Activated CD8-positive, alpha-beta memory T cell treated with anti-CD3 and anti-CD28 coated beads, Interleukin-2, amount 10 ng/mL, durations not matched to agents 7 days and 5 days (primary cell): ENCODE measurements at regions of chr3 and their contacts with region 1.

Region 1: GRCh38 chr3:32467333-32468070 is 35.1 kb downstream of the CMTM6 start:
- DNase-seq: peak; percentile 78
- ATAC-seq: peak; percentile 94
- H3K4me3 Mint-ChIP-seq: peak overlapping the region; percentile 9
- H3K27ac Mint-ChIP-seq: no peak overlapping the region
- H3K4me1 Mint-ChIP-seq: peaks cover 38% of the 10 kb centered on the region
- H3K27me3 Mint-ChIP-seq: no peaks in the 10 kb centered on the region

Region 2: DNA sequence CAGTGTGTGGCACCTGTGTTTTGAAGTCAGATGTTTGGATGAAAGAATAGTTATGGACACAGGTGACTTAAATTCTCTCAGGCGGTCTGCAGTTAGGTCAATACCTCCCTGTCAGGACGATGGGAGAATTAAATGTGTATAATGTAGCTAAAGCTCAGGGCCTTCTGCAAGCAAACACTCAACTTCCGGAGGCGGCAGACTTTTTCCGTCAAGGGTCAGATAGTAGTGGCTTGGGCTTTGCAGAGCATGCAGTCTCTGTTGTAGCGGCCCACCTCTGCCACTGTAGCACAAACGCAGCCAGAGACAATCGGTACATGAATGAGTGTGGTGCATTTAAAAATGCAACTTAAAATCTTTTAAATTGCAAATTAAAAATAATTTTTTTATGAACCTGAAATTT is 181.6 kb before region 1 on chr3:
- CTCF ChIA-PET with region 1: interaction called, 11 read pairs
- DNase-seq: peak; percentile 65
- ATAC-seq: peak; percentile 62
- H3K4me3 Mint-ChIP-seq: peak overlapping the region; percentile 8
- H3K27ac Mint-ChIP-seq: peak overlapping the region; percentile 83
- H3K4me1 Mint-ChIP-seq: peaks cover 31% of the 10 kb centered on the region
- H3K27me3 Mint-ChIP-seq: peaks cover 3% of the 10 kb centered on the region

Region 3: DNA sequence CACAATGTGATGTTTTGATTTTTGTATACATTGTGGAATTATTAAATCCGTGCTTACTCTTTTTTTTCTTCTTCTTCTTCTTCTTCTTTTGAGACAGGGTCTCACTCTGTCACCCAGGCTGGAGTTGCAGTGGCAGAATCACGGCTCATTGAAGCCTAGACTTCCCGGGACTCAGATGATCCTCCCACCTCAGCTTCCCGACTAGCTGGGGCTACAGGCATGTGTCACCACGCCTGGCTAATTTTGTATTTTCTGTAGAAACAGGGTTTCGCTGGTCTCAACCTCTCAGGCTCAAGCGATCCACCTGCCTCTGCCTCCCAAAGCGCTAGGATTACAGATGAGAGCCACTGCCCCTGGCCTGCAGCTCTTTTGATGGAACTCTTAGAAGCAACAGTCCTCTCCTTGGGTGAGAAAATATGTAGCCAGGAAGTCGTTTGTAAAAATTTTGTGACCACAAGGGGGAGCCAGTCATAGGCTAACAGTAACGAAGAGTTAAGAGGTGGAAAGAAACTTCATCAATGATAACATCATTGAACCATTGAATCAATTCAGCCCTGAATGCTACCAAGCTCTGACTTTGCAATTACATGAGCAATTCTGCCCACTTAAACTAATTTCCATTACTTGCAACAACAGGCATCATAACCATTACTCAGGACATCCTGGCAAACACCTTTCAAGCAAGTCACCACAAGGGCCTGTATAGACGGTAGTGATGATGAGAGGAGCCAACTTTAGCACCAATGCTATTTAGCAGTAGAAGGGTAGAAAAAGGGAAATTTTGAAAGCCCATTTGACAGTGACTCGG is 92.5 kb before region 1 on chr3:
- CTCF ChIA-PET with region 1: interaction called, 114 read pairs
- DNase-seq: peak; percentile 80
- ATAC-seq: peak; percentile 85
- H3K4me3 Mint-ChIP-seq: no peak overlapping the region
- H3K27ac Mint-ChIP-seq: peak overlapping the region; percentile 22
- H3K4me1 Mint-ChIP-seq: peaks cover 23% of the 10 kb centered on the region
- H3K27me3 Mint-ChIP-seq: peaks cover 3% of the 10 kb centered on the region

Region 4: DNA sequence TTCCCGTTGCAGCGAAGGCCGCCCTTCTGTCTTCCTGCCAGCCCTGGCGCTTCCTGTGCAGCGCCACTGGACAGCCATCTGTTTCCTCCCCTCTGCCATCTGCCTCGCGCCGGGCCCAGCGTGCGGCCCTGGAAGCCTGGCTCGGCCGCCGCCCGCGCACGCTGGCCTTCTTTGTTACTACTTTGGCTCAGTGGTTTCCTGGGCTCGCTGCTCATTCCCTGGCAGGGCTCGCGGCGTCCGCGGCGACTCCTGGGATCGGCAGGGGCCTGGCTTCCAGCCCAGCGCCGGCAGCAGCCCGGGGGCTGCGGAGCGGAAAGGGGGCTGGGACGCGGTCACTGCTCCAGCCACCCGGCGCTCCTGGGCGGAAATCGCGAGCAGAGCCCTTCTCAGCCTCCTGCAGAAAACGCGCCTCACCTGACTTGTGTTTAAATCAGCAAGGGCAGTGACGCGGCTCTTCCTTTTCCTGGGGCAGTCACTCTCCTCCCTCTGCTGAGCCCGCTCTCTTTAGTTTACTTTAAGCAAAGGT is 65.9 kb before region 1 on chr3:
- CTCF ChIA-PET with region 1: interaction called, 42 read pairs
- DNase-seq: peak; percentile 81
- ATAC-seq: peak; percentile 87
- H3K4me3 Mint-ChIP-seq: peak overlapping the region; percentile 76
- H3K27ac Mint-ChIP-seq: peak overlapping the region; percentile 93
- H3K4me1 Mint-ChIP-seq: peaks cover 65% of the 10 kb centered on the region
- H3K27me3 Mint-ChIP-seq: no peaks in the 10 kb centered on the region

Region 5: GRCh38 chr3:32428092-32429068 is 39.1 kb before region 1 on chr3:
- CTCF ChIA-PET with region 1: interaction called, 40 read pairs
- DNase-seq: peak; percentile 75
- ATAC-seq: peak; percentile 50
- H3K4me3 Mint-ChIP-seq: peak overlapping the region; percentile 61
- H3K27ac Mint-ChIP-seq: peak overlapping the region; percentile 99
- H3K4me1 Mint-ChIP-seq: peaks cover 91% of the 10 kb centered on the region
- H3K27me3 Mint-ChIP-seq: no peaks in the 10 kb centered on the region

Region 6: GRCh38 chr3:32781210-32781968 is 313.9 kb after region 1 on chr3:
- CTCF ChIA-PET with region 1: no interaction called
- DNase-seq: peak; percentile 81
- ATAC-seq: peak; percentile 95
- H3K4me3 Mint-ChIP-seq: peak overlapping the region; percentile 81
- H3K27ac Mint-ChIP-seq: peak overlapping the region; percentile 50
- H3K4me1 Mint-ChIP-seq: peaks cover 10% of the 10 kb centered on the region
- H3K27me3 Mint-ChIP-seq: peaks cover 9% of the 10 kb centered on the region